ENCODE measurements at regions of chrX and their contacts with region 1.

Region 1: GRCh38 chrX:72540318-72540717 is 32.3 kb downstream of the HDAC8 start:
- DNase-seq: no peak
- H3K4me3 ChIP-seq: no peak overlapping the region
- H3K27ac ChIP-seq: no peak overlapping the region
- H3K4me1 ChIP-seq: peaks cover 0 to 2% of the 10 kb centered on the region in 2 donors
- H3K27me3 ChIP-seq: no peaks in the 10 kb centered on the region
- CTCF ChIP-seq: peak in 2 of 3 experiments; percentile 26 to 32

Region 2: DNA sequence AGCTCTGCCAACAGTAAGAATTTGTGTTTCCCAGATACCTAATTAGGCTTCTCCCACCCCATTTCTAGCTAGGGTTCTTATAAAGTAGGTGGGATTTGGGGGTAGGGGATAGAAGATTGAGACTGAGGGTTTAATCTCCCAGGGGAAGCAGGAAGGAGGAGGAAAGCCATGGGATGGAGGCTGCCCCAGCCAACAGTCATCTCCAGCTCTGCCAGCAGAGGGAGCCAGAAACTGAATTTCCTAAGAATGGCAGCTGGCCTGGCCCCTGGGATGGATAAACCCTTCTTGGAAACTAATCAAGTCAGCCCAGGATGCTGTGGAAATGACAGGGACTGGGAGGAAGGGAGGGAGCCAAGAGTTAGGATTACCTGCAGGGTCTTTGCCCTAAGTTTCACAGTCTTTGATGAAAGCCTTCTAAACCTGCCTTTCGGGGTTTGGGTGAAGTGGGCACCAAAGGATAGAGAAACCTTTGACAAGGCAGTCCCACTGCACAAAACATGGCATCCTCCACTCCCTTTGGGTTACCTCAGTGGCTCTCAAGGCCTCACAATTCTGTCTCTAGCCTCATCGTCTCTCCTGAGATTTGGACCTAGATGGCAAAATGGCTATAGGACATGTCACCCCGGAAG is 294.7 kb before region 1 on chrX:
- intact Hi-C with region 1: loop called (anchors 10 kb)
- DNase-seq: no peak
- H3K4me3 ChIP-seq: no peak overlapping the region
- H3K27ac ChIP-seq: no peak overlapping the region
- H3K4me1 ChIP-seq: no peaks in the 10 kb centered on the region
- H3K27me3 ChIP-seq: no peaks in the 10 kb centered on the region
- CTCF ChIP-seq: peak in 2 of 3 experiments; percentile 55 to 66